Mammary epithelial cell (primary cell): ENCODE measurements at regions of chr5 and their contacts with region 1.

Region 1: DNA sequence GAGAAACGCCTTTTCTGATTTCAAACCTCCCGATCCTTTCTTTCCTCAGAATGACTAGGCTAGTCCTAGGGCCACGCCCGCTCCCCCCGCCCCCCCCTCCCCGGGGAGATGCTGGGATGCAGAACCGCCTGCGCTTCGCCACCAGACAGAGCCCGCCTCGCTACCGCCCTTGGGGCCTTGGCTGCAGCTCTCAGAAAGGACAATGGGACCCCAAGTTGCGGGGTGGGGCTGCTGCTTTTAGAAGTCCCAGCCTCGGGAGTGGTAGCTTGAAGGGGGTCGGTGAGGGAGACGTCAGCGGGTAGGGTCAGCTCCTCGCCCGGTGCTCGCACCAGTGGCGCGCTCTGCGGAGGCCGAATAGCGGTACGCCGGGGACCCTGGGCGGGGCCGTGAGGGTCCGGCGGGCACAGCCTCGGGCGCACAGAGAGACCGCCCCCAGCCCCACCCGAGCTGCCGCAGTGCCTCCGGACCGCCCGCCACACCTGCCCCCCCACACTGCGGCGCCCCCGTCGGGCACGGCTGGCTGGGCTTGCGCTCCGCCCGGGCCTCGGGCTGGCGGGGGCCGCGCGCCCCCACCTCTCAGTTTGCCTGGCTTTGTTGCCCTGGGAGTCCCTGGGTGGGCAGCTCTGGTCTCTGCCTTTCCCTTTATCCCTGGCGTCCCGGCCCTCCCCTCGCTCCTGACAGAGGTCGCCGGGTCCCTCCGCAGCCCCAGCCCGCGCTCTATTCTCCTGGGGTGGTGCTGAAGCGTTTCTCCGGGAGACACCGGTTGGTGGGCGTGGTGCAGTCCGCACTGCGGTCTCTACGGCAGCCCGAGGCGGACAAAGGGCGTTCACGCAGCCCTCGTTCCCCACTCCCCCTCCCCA is 1.2 kb downstream of the MAP1B start:
- DNase-seq: peak; percentile 33
- H3K4me3 ChIP-seq: peak overlapping the region; percentile 64 to 74 (median 66)
- H3K27ac ChIP-seq: no peak overlapping the region
- H3K4me1 ChIP-seq: peaks cover 22% of the 10 kb centered on the region
- H3K27me3 ChIP-seq: peaks cover 18% of the 10 kb centered on the region
- CTCF ChIP-seq: no peak

Region 2: DNA sequence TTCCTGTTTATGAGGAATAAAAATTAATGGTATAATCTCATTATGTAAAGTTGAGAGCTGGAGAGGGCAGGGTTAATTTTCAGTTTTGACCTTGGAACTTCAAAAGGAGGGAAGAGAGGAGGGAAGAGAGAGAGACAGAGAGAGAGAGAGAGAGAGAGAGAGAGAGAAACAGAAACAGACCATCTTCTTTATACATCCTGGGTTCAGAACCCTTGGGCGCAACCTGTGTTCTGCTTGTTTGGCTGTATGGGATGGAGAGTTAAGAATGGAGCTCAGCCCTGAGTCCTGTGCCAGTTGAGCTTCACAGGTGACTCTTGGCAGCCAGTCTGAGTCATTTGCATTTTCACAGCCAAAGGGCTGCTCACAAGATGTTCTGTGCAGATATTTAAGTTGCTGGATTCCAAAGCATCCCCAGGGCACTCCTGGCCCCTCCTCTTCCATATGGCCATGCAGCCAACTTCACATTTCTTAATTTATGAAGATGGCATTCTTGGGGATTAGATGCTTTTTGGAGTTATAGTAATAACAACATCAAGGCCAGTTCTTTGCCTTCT is 245.8 kb before region 1 on chr5:
- CTCF ChIA-PET with region 1: interaction called, 15 read pairs
- dilution Hi-C with region 1: no loop called
- in situ Hi-C with region 1: no loop called
- intact Hi-C with region 1: no loop called
- DNase-seq: no peak
- H3K4me3 ChIP-seq: no peak overlapping the region
- H3K27ac ChIP-seq: no peak overlapping the region
- H3K4me1 ChIP-seq: peaks cover 14% of the 10 kb centered on the region
- H3K27me3 ChIP-seq: no peaks in the 10 kb centered on the region
- CTCF ChIP-seq: no peak

Region 3: GRCh38 chr5:71922584-71923106 is 185.8 kb before region 1 on chr5:
- CTCF ChIA-PET with region 1: no interaction called
- dilution Hi-C with region 1: no loop called
- in situ Hi-C with region 1: no loop called
- intact Hi-C with region 1: loop called (anchors 2 kb)
- DNase-seq: peak; percentile 92
- H3K4me3 ChIP-seq: no peak overlapping the region
- H3K27ac ChIP-seq: peak overlapping the region; percentile 68
- H3K4me1 ChIP-seq: peaks cover 22% of the 10 kb centered on the region
- H3K27me3 ChIP-seq: no peaks in the 10 kb centered on the region
- CTCF ChIP-seq: peak; percentile 8 to 39

Region 4: GRCh38 chr5:72179028-72179815 is 70.8 kb after region 1 on chr5:
- CTCF ChIA-PET with region 1: no interaction called
- dilution Hi-C with region 1: no loop called
- in situ Hi-C with region 1: no loop called
- intact Hi-C with region 1: no loop called
- DNase-seq: peak; percentile 82
- H3K4me3 ChIP-seq: peak overlapping the region; percentile 18 to 24 (median 21)
- H3K27ac ChIP-seq: no peak overlapping the region
- H3K4me1 ChIP-seq: peaks cover 17% of the 10 kb centered on the region
- H3K27me3 ChIP-seq: peaks cover 5% of the 10 kb centered on the region
- CTCF ChIP-seq: no peak

Region 5: GRCh38 chr5:72441861-72442540 is 333.6 kb after region 1 on chr5:
- CTCF ChIA-PET with region 1: no interaction called
- dilution Hi-C with region 1: no loop called
- in situ Hi-C with region 1: no loop called
- intact Hi-C with region 1: no loop called
- DNase-seq: peak; percentile 92
- H3K4me3 ChIP-seq: no peak overlapping the region
- H3K27ac ChIP-seq: peak overlapping the region; percentile 45
- H3K4me1 ChIP-seq: peaks cover 23% of the 10 kb centered on the region
- H3K27me3 ChIP-seq: no peaks in the 10 kb centered on the region
- CTCF ChIP-seq: no peak